ENCODE measurements at regions of chr18 and their contacts with region 1.

Region 1: GRCh38 chr18:58043491-58044379 is at the start of gene NEDD4L:
- DNase-seq: peak; percentile 89
- H3K4me3 ChIP-seq: peak within 1 kb of the TSS; percentile 89 to 98
- H3K27ac ChIP-seq: peak within 1 kb of the TSS; percentile 89 to 93
- H3K4me1 ChIP-seq: peaks cover 5% of the 10 kb centered on the region
- H3K27me3 ChIP-seq: no peaks in the 10 kb centered on the region
- CTCF ChIP-seq: peak; percentile 63 to 96 (median 88)
- POLR2A ChIP-seq: peak; percentile 22
- total RNA-seq, gene NEDD4L: 280 to 420 TPM

Region 2: DNA sequence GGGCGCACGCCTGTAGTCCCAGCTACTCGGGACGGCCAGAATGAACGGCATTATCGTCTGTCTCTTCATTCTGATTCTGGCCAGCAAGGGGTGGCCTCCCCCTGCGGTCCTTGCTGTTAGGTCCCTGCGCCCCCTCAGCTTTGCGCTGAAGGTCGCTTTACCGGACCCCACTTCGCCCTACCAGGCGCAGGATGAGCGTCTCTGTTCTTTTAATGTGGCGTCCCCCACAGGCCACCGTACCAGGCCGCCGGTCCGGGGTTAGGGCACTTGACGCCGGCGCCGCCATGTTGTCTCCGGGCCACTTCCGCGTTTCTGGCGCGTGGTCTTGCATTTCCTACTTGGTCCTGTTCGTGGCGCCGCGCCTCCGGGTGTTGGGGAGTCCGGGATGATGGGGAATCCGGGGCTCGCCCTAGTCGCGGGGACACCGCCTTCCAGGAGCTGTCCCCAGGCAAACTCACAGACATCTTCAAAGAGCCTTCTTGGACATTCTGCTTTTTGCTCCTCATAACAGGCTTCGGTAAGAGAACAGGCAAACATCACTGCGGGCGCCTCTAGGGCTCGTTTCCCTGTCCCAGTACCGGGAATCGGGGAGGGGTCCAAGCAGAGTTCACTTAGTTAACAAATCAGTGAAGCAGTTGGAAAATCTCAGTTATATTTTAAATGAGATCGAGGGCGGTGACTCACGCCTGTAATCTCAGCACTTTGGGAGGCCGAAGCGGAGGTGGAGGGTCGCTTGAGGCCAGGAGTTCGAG is 413.6 kb before region 1 on chr18:
- intact Hi-C with region 1: loop called (anchors 10 kb)
- DNase-seq: peak; percentile 98
- H3K4me3 ChIP-seq: peak overlapping the region; percentile 42 to 47
- H3K27ac ChIP-seq: peak overlapping the region; percentile 72 to 75
- H3K4me1 ChIP-seq: no peaks in the 10 kb centered on the region
- H3K27me3 ChIP-seq: no peaks in the 10 kb centered on the region
- CTCF ChIP-seq: peak; percentile 47 to 94 (median 80)
- POLR2A ChIP-seq: no peak

Region 3: GRCh38 chr18:57965246-57965645 is 78.5 kb before region 1 on chr18:
- intact Hi-C with region 1: no loop called
- DNase-seq: no peak
- H3K4me3 ChIP-seq: no peak overlapping the region
- H3K27ac ChIP-seq: no peak overlapping the region
- H3K4me1 ChIP-seq: no peaks in the 10 kb centered on the region
- H3K27me3 ChIP-seq: no peaks in the 10 kb centered on the region
- CTCF ChIP-seq: no peak
- POLR2A ChIP-seq: no peak

Region 4: GRCh38 chr18:58117786-58118403 is 74.2 kb after region 1 on chr18:
- intact Hi-C with region 1: loop called (anchors 2 kb)
- DNase-seq: peak; percentile 13
- H3K4me3 ChIP-seq: no peak overlapping the region
- H3K27ac ChIP-seq: peak overlapping the region; percentile 16 to 25
- H3K4me1 ChIP-seq: no peaks in the 10 kb centered on the region
- H3K27me3 ChIP-seq: no peaks in the 10 kb centered on the region
- CTCF ChIP-seq: no peak
- POLR2A ChIP-seq: no peak

Region 5: GRCh38 chr18:58176915-58177717 is 133.4 kb after region 1 on chr18:
- intact Hi-C with region 1: loop called (anchors 5 kb)
- DNase-seq: peak; percentile 63
- H3K4me3 ChIP-seq: no peak overlapping the region
- H3K27ac ChIP-seq: peak overlapping the region; percentile 31 to 39
- H3K4me1 ChIP-seq: peaks cover 11% of the 10 kb centered on the region
- H3K27me3 ChIP-seq: no peaks in the 10 kb centered on the region
- CTCF ChIP-seq: peak in 1 of 4 experiments; percentile 4
- POLR2A ChIP-seq: no peak

Region 6: DNA sequence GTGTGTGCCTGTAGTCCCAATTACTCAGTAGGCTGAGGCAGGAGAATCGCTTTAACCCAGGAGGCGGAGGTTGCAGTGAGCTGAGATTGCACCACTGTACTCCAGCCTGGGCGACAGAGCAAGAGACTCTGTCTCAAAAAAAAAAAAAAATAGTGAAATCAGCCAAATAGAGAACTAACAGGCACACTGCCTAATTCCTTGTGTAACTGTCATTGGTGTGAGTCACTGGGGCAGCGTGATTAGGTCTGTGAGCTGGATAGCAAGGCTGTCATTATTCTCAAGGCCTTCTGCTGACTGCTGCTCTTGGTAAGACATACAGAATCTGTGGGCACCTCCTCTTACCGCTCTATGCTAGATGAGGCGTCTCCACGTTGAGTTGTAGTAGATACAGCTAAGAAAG is 270.5 kb after region 1 on chr18:
- intact Hi-C with region 1: loop called (anchors 10 kb)
- DNase-seq: peak; percentile 68
- H3K4me3 ChIP-seq: no peak overlapping the region
- H3K27ac ChIP-seq: peak overlapping the region; percentile 59 to 66
- H3K4me1 ChIP-seq: peaks cover 27% of the 10 kb centered on the region
- H3K27me3 ChIP-seq: no peaks in the 10 kb centered on the region
- CTCF ChIP-seq: no peak
- POLR2A ChIP-seq: peak; percentile 12

Region 7: DNA sequence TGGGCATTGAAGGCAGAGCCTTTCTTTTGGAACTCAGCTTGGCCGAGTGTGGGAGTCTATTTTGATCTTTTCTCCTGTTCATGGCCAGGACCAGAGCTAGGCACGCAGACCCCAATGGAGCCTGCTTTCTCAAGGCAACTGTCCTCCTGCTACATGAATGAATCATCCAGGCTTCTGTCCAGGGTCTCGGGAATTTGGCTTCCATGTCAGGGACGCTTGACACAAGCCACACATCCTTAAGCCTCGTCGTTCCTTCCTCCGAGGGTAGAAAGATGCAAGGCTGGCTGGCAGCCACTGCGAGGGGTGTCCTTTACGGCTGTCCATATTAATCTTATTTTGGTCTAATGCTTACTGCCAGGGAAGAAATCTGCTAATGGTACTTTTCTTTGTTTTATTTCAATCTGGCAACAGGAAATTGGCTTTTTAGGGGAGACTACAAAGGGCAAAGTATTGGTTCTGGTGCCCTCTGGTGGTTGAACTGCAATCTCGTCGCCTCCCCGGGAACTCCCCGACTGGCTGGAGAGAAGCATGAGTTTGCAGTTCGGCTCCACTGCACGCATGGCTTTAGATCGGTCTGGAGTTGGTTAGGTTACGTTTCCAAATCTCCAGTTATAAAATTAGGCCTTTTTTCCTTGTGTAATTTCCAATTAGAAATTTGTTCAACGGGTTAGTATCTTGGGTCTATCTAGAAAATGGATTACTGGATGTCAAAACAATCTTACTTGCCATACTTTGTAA is 449.9 kb after region 1 on chr18:
- intact Hi-C with region 1: loop called (anchors 5 kb)
- DNase-seq: peak; percentile 71
- H3K4me3 ChIP-seq: no peak overlapping the region
- H3K27ac ChIP-seq: peak overlapping the region in 1 of 2 donors; percentile 26
- H3K4me1 ChIP-seq: no peaks in the 10 kb centered on the region
- H3K27me3 ChIP-seq: no peaks in the 10 kb centered on the region
- CTCF ChIP-seq: peak; percentile 75 to 89 (median 86)
- POLR2A ChIP-seq: no peak

Region 8: GRCh38 chr18:58768293-58768974 is 724.7 kb after region 1 on chr18:
- intact Hi-C with region 1: loop called (anchors 10 kb)
- DNase-seq: peak; percentile 75
- H3K4me3 ChIP-seq: no peak overlapping the region
- H3K27ac ChIP-seq: peak overlapping the region; percentile 66 to 67
- H3K4me1 ChIP-seq: peaks cover 5% of the 10 kb centered on the region
- H3K27me3 ChIP-seq: no peaks in the 10 kb centered on the region
- CTCF ChIP-seq: peak; percentile 74 to 94 (median 84)
- POLR2A ChIP-seq: no peak

Measured in prostate gland (tissue), 2 donors.